ENCODE measurements at regions of chr2 and their contacts with region 1.

Region 1: GRCh38 chr2:153222231-153223165 is 256.1 kb downstream of the RPRM start:
- DNase-seq: peak in 1 of 2 experiments; percentile 28
- H3K4me3 ChIP-seq: no peak overlapping the region
- H3K27ac ChIP-seq: no peak overlapping the region
- H3K4me1 ChIP-seq: no peaks in the 10 kb centered on the region
- H3K27me3 ChIP-seq: no peaks in the 10 kb centered on the region
- CTCF ChIP-seq: no peak

Region 2: GRCh38 chr2:152126664-152127063 is 1095.8 kb before region 1 on chr2:
- CTCF ChIA-PET with region 1: no interaction called
- POLR2A ChIA-PET with region 1: no interaction called
- intact Hi-C with region 1: no loop called
- DNase-seq: no peak
- H3K4me3 ChIP-seq: no peak overlapping the region
- H3K27ac ChIP-seq: no peak overlapping the region
- H3K4me1 ChIP-seq: no peaks in the 10 kb centered on the region
- H3K27me3 ChIP-seq: no peaks in the 10 kb centered on the region
- CTCF ChIP-seq: no peak

Region 3: DNA sequence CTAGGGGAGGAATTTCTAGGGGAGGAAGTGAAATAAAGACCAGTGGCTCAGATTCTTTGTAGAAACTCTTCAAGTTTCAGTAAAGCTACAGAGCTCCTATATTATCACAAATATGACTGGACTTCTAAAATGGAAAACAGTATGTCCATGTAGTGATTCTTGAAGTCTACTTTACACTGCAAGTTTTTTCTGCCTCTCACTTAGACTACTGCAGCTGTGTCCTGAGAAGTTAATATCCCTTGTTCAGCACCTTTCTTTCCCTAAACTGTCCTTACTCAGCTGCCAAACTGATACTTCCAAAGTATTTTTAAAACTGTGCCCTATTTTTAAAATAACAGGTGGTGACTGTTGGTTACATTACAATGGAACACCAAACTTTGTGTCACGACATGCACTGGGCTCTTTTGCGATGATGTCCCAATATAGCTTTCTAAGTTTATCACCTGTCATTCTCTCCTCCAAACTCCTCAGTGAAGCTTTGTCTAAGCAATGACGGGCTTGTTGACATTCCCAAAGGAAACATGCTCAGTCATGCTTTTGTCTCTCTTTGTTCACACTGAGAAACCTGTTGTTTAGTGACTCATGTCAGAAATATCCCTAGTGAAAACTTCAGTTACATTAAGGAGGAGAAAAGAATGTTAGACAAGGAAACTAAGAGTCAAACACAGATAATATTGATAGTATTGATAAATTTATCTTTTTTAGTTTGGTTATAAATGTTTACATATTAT is 163.0 kb before region 1 on chr2:
- CTCF ChIA-PET with region 1: interaction called, 13 read pairs
- POLR2A ChIA-PET with region 1: no interaction called
- intact Hi-C with region 1: no loop called
- DNase-seq: peak; percentile 35 to 85
- H3K4me3 ChIP-seq: no peak overlapping the region
- H3K27ac ChIP-seq: peak overlapping the region; percentile 59
- H3K4me1 ChIP-seq: peaks cover 16% of the 10 kb centered on the region
- H3K27me3 ChIP-seq: no peaks in the 10 kb centered on the region
- CTCF ChIP-seq: no peak

Region 4: DNA sequence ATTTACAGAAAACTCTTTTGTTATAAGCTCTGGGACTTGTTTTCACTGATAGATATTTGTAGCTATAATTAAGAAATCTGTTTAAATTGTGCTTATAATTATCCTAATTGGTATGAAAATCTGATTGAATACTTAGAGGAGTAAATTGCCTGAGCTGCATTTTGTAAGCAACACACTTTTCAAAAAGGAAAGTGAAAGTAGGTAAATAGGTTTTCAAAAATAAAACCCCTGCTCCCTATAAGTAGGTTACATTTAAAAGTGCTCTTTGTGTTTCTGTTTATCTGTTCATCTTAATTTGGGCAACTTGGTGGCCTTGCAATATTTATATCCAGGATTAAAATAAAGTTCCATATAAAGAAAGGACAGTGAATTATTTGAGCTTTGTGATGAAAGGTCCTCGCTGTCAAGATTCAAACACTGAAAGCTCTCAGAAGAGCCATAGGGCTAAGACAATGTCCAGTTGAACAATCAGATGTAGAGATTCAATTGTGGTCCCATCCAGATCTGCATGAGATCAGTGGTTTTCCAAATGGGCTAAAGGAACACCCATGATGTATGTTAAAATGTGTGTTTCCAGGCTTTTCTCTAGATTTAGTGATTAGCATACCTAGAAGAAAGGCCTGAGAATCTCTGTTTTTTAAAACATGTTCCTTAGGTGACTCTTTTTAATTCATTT is 115.6 kb before region 1 on chr2:
- CTCF ChIA-PET with region 1: no interaction called
- POLR2A ChIA-PET with region 1: no interaction called
- intact Hi-C with region 1: no loop called
- DNase-seq: no peak
- H3K4me3 ChIP-seq: peak overlapping the region; percentile 35; the same call in 1 of the 2 replicates
- H3K27ac ChIP-seq: no peak overlapping the region
- H3K4me1 ChIP-seq: no peaks in the 10 kb centered on the region
- H3K27me3 ChIP-seq: no peaks in the 10 kb centered on the region
- CTCF ChIP-seq: no peak

Region 5: GRCh38 chr2:153235516-153235915 is 13.0 kb after region 1 on chr2:
- CTCF ChIA-PET with region 1: no interaction called
- POLR2A ChIA-PET with region 1: no interaction called
- intact Hi-C with region 1: no loop called
- DNase-seq: no peak
- H3K4me3 ChIP-seq: no peak overlapping the region
- H3K27ac ChIP-seq: no peak overlapping the region
- H3K4me1 ChIP-seq: no peaks in the 10 kb centered on the region
- H3K27me3 ChIP-seq: no peaks in the 10 kb centered on the region
- CTCF ChIP-seq: no peak

Region 6: DNA sequence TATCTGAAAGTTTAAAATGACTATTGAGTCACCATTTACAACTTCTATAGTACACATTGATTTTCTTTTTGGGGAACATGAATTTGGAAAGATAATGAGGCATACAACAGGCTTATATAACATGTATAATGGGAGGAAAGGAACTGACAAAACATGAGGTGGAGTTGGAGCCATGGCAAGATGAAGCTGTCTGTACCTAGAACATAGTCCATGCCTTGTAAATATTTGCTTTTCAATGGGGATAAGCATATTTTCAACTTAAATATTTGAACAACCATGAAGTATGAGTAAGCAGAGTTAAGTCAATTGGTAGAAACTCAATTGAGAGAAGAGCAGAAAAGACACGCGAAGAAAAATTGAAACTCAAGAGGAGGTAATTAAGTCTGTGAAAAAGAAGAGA is 612.2 kb after region 1 on chr2:
- CTCF ChIA-PET with region 1: no interaction called
- POLR2A ChIA-PET with region 1: no interaction called
- intact Hi-C with region 1: no loop called
- DNase-seq: no peak
- H3K4me3 ChIP-seq: no peak overlapping the region
- H3K27ac ChIP-seq: no peak overlapping the region
- H3K4me1 ChIP-seq: no peaks in the 10 kb centered on the region
- H3K27me3 ChIP-seq: no peaks in the 10 kb centered on the region
- CTCF ChIP-seq: no peak

Region 7: DNA sequence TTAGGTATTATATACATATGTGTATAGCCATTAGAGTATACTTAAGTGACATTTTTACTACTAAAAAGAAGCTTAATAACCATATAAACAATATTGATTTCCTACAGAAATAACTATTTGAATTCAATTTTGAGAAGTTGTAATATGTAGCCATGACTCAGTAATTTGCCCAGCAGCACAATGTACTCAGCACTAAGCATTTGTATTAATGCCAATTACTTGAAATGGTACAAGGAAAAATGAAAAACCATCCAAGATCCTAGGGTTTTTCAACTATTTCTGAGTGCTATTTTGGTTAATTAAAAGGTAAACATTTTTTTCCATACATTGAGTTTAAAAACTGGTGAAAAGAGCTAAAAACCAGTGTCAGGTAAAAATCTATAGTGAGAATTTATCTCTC is 1800.0 kb after region 1 on chr2:
- CTCF ChIA-PET with region 1: no interaction called
- POLR2A ChIA-PET with region 1: interaction called, 20 read pairs
- intact Hi-C with region 1: no loop called
- DNase-seq: no peak
- H3K4me3 ChIP-seq: no peak overlapping the region
- H3K27ac ChIP-seq: no peak overlapping the region
- H3K4me1 ChIP-seq: no peaks in the 10 kb centered on the region
- H3K27me3 ChIP-seq: no peaks in the 10 kb centered on the region
- CTCF ChIP-seq: no peak